Right ventricle myocardium inferior (tissue), 1 donor: ENCODE measurements at regions of chr6 and their contacts with region 1.

Region 1: GRCh38 chr6:93604951-93605350 is 185.6 kb upstream of the EPHA7 start:
- DNase-seq: no peak
- ATAC-seq: no peak

Region 2: GRCh38 chr6:93447874-93448273 is 157.1 kb before region 1 on chr6:
- intact Hi-C with region 1: no loop called
- DNase-seq: no peak
- ATAC-seq: no peak

Region 3: DNA sequence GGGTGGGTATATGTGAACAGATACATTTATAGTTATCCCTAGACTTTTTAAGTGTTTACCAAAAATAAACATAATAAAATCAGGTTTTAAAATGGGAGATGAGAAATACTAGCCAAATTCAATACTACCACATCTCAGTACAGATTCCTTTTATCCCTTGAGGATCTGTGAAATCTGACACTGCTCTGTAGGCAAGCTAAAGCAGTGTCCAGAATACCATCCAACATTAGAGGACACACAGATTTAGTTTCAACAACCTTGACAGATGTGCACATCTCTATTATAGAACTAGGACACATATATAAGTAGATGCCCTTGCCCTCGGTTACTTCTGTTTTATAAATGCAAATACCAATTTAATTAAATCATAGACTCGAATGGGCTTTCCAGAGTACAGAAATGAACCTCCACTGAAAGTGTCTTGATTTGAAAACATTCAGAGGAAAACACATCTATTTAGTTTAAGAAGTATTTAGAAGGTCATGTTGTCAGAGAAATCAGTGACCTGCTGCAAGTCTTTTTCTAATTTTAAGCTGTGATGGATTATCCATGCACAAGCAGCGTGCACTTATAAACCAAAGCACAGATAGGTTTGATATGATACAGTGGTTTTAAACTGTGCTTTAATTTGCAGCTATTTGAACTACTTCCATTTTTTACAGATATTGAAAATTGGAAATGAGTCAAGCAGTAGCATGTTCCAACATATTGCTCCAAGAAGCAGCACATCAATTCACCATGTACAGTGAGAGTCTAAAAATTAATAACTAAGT is 29.3 kb before region 1 on chr6:
- intact Hi-C with region 1: loop called (anchors 1 kb)
- DNase-seq: no peak
- ATAC-seq: no peak